ENCODE measurements at regions of chr11 and their contacts with region 1.

Region 1: DNA sequence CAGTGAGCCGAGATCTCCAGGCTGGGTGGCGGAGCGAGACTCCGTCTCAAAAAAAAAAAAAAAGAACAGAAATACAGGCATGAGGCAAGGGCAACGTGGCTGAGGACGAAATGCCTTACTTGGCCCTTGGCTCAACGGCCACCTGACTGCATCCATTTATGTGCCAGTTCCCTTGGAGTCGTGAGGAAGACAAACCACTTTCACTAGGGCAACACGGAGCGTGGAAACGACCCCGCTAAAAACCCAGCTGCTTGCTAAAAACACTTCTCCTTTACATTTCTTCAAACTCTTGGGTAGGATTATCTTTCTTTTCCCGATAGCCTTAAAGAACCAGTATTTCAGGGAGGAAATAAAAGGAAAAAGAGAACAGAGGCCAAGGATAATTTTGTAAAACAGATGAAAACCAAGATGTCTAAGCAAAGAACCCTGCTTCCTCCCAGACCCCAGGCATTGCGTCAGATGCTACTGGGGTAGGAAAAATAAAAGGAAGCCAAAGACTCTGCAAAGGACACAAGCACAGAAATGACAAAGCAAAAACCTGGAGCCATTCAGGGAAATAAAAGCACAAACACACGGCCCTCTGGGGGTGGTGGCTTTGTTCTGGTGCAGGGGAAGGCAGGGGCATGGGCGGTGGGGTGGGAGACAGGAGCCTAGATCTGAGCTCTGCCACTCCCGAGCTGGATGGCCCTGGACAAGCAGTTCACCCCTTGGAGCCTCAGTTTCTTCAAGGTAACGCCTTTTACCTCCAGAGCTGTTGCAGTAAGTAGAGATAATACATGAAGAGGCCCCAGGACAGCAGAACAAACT is 37.0 kb downstream of the PC start:
- DNase-seq: no peak
- CTCF ChIP-seq: no peak

Region 2: DNA sequence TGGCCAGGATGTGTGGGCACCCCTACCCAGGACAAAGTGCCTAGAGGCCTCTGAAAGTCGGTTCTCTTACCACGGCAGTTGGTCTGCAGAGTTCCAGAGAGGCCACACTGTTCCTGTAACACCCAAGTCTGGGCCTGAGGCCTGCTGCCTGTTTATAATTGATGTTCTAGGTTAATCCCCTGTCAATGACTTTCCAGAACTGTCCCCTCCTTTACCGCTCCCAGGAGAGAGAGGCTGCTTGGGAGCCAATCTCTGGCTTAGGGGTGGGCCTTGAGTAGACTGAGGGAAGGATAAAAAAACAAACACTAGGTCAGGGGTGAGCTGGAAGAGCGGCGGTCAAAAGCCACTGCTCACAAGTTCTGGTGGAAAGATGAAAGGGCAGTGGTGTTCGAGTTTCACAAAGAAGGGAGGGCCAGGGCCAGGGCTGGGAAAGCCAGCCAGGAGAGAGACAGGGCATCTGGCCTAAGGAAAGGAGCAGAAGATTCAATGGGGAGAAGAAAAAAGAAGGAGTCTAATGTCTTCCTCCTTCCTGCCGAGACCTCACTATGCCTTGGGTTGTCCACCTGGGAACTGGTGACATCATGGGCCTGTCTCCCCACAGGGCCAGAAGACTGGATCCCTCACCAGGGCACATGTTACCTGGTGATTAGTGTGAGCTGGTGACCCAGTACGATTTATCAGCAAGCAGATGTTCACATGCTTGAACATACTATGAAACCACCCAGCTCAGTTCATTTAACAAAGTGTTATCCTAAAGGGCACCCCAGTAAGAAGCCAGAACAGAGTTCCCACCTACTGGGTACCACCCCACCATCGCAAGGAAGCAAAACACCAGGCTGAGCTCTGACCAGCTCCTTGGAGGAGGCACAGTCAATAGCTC is 13.2 kb before region 1 on chr11:
- CTCF ChIA-PET with region 1: interaction called, 11 read pairs
- POLR2A ChIA-PET with region 1: no interaction called
- DNase-seq: no peak
- CTCF ChIP-seq: no peak